Gastrocnemius medialis (tissue), 4 donors: ENCODE measurements at regions of chr3 and their contacts with region 1.

Region 1: DNA sequence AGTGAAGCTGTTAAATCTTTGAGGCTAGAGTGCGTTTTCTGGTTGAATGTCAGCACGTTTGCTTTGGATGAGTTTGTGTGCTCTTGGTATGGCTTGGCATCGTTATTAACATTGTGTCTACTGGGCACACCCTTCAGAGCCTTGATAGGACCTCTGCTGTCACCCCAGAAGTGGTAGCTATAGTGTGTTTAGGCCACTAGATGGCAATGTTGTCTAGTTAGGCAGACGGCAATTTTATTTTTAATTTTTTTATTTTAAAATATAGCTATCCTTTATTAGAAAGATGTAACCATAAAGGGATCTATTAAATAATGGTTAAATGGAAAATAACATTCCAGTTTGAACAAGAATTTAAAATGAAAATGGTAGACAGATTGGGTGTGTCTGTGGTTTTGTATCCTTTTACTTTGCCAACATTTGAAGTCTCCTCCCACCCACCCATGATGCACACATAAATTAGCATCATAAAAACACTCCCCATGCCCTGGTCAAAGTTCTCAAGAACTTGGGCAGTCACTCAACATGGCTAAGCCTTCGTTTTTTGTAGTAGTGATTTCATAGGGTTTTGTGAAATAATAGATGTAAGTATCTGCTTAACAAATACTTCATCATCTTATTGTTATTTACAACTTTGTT is 200.7 kb downstream of the KCNH8 start:
- DNase-seq: no peak
- ATAC-seq: no peak
- H3K4me3 ChIP-seq: no peak overlapping the region
- H3K27ac ChIP-seq: no peak overlapping the region
- H3K4me1 ChIP-seq: no peaks in the 10 kb centered on the region
- H3K27me3 ChIP-seq: no peaks in the 10 kb centered on the region
- CTCF ChIP-seq: peak in 4 of 5 experiments; percentile 20 to 71 (median 42)
- POLR2A ChIP-seq: no peak

Region 2: GRCh38 chr3:19399356-19399755 is 50.3 kb after region 1 on chr3:
- in situ Hi-C with region 1: no loop called
- intact Hi-C with region 1: no loop called
- DNase-seq: no peak
- ATAC-seq: no peak
- H3K4me3 ChIP-seq: no peak overlapping the region
- H3K27ac ChIP-seq: no peak overlapping the region
- H3K4me1 ChIP-seq: no peaks in the 10 kb centered on the region
- H3K27me3 ChIP-seq: no peaks in the 10 kb centered on the region
- CTCF ChIP-seq: no peak
- POLR2A ChIP-seq: no peak

Region 3: DNA sequence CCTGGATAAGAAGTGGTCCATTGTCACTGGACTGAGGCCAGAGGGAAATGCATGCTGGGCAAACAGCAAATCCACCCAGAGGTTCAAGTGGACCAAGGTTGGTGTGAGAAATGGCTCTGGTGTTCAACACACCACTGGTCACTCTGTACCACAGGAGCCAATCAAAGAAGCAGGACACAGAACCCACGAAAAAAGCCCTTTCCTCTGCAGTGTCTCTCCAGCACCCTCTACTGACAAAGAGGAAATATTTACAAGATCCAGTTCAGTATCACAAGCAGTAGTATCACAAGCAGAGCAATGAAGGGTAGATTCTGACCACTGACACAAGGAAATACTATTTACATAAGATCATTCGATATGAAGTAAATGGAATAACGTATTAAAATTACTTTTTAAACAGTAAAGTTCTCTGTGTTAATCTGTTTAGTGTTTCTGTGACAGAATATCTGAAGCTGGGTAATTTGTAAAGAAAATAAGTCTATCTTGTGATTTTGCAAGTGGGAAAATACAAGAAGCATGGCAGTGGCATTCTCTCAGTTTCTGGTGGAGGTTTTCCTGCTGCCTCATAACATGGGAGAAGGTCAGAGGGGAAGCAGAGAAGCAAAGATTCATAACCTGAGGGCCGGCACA is 194.3 kb after region 1 on chr3:
- in situ Hi-C with region 1: no loop called
- intact Hi-C with region 1: loop called (anchors 1 kb)
- DNase-seq: no peak
- ATAC-seq: no peak
- H3K4me3 ChIP-seq: no peak overlapping the region
- H3K27ac ChIP-seq: no peak overlapping the region
- H3K4me1 ChIP-seq: no peaks in the 10 kb centered on the region
- H3K27me3 ChIP-seq: no peaks in the 10 kb centered on the region
- CTCF ChIP-seq: peak in 3 of 5 experiments; percentile 20 to 47 (median 35)
- POLR2A ChIP-seq: no peak

Region 4: GRCh38 chr3:19866751-19867347 is 517.8 kb after region 1 on chr3:
- in situ Hi-C with region 1: loop called in 2 of 4 experiments (anchors 25 kb)
- intact Hi-C with region 1: loop called (anchors 5 kb)
- DNase-seq: no peak
- ATAC-seq: peak; percentile 45 to 69
- H3K4me3 ChIP-seq: no peak overlapping the region
- H3K27ac ChIP-seq: no peak overlapping the region
- H3K4me1 ChIP-seq: no peaks in the 10 kb centered on the region
- H3K27me3 ChIP-seq: no peaks in the 10 kb centered on the region
- CTCF ChIP-seq: peak in 4 of 5 experiments; percentile 45 to 78 (median 63)
- POLR2A ChIP-seq: no peak